ENCODE measurements at regions of chr15 and their contacts with region 1.

Region 1: DNA sequence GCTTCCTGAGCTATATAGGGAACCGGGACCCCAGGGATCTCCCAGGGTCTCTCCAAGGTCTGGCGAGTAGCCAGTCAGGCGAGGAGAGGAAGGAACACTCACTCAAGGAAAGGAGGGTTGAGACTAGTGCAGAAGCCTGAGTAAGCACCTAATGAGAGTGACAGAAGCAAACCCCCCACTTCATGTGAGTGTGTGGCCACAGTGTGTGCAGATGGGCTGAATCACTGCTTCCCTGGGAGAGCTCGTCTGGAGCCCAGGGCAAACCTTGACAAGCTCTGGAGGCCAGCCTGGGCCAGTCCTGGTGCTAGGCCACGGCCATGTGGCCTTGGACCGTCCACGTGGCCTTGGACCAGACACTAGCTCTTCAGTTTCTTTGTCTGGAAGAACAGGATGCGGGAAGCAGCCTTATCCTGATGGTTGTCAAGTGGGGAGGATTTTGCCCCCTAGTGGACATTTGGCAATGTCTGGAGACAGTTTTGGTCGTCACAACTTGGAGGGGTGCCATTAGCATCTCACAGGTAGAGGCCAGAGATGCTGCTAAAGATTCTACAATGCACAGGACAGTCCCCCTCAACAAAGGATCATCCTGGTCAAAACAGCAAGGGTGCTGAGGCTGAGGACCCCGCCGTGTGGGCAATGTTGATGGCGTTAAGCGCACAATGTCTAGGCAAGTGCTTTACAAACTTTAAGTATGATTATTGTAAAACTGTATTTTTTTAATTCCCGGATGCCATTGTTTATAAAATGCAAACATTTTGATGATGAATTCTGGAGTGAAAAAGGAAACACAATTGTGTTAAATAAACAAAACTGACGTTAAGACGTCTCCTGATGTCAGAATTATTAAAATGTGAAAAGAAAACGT is 34.8 kb upstream of the CTSH start:
- DNase-seq: peak in 6 of 14 experiments; percentile 8 to 66 (median 46)
- ATAC-seq: no peak
- H3K4me3 ChIP-seq: no peak overlapping the region
- H3K4me3 Mint-ChIP-seq: no peak overlapping the region
- H3K27ac ChIP-seq: no peak overlapping the region
- H3K27ac Mint-ChIP-seq: no peak overlapping the region
- H3K4me1 ChIP-seq: peaks cover 13% of the 10 kb centered on the region
- H3K4me1 Mint-ChIP-seq: no peaks in the 10 kb centered on the region
- H3K27me3 ChIP-seq: no peaks in the 10 kb centered on the region
- H3K27me3 Mint-ChIP-seq: no peaks in the 10 kb centered on the region
- CTCF ChIP-seq: no peak

Region 2: GRCh38 chr15:78909791-78910228 is 69.9 kb before region 1 on chr15:
- CTCF ChIA-PET with region 1: no interaction called
- POLR2A ChIA-PET with region 1: no interaction called
- intact Hi-C with region 1: loop called in 1 of 2 experiments (anchors 1 kb)
- DNase-seq: peak in 4 of 14 experiments; percentile 19 to 68 (median 51)
- ATAC-seq: peak; percentile 52
- H3K4me3 ChIP-seq: no peak overlapping the region
- H3K4me3 Mint-ChIP-seq: no peak overlapping the region
- H3K27ac ChIP-seq: no peak overlapping the region
- H3K27ac Mint-ChIP-seq: peak overlapping the region; percentile 10
- H3K4me1 ChIP-seq: peaks cover 13% of the 10 kb centered on the region
- H3K4me1 Mint-ChIP-seq: peaks cover 31% of the 10 kb centered on the region
- H3K27me3 ChIP-seq: no peaks in the 10 kb centered on the region
- H3K27me3 Mint-ChIP-seq: no peaks in the 10 kb centered on the region
- CTCF ChIP-seq: peak; percentile 41